Ovary (tissue), 10 donors: ENCODE measurements at regions of chr17 and their contacts with region 1.

Region 1: DNA sequence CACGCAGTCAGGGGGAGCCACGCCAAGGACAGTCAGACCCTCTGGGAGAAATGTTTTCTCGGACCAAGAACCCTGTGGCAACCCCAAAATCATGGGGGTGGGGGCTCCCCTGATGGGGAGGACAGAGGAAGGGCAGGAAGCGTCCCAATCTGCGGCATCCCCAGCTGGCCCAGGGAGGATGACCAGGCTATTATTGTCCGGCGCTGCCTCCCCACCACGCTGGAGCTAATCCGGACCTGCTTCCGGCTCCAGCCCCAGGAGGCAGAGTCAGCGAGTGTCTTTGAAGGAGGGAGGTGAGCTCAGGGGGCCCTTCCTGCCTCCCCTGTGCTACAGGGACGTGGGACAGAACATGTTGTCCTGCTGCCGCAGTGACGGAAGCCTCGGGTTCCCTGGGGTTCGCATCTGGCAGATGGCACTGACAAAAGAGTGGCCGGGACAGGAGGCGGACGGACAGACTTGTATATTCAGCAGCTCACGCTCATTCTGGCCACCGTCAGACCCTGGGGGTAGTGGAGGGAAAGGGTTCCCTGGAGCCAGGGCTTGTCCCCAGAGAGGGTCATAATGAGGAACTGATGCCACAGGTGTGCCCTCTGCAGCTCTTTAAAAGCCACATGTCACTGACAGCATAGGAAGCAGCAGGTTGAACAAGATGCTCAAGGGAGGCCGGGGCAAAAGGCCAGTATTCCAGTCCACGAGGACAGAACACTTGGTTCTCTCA is 54.3 kb upstream of the CDC42EP4 start:
- DNase-seq: peak; percentile 40 to 64 (median 52)
- H3K4me3 ChIP-seq: no peak overlapping the region
- H3K27ac ChIP-seq: peak overlapping the region; percentile 50 to 64
- H3K4me1 ChIP-seq: peaks cover 18% of the 10 kb centered on the region
- H3K27me3 ChIP-seq: no peaks in the 10 kb centered on the region
- CTCF ChIP-seq: no peak
- EP300 ChIP-seq: no peak
- POLR2A ChIP-seq: no peak

Region 2: GRCh38 chr17:73247726-73248125 is 118.3 kb before region 1 on chr17:
- intact Hi-C with region 1: loop called in 1 of 4 experiments (anchors 2 kb)
- DNase-seq: no peak
- H3K4me3 ChIP-seq: no peak overlapping the region
- H3K27ac ChIP-seq: no peak overlapping the region
- H3K4me1 ChIP-seq: no peaks in the 10 kb centered on the region
- H3K27me3 ChIP-seq: no peaks in the 10 kb centered on the region
- CTCF ChIP-seq: no peak
- EP300 ChIP-seq: no peak
- POLR2A ChIP-seq: no peak